Activated CD4-positive, alpha-beta T cell treated with anti-CD3 and anti-CD28 coated beads for 36 hours (primary cell): ENCODE measurements at regions of chr17 and their contacts with region 1.

Region 1: DNA sequence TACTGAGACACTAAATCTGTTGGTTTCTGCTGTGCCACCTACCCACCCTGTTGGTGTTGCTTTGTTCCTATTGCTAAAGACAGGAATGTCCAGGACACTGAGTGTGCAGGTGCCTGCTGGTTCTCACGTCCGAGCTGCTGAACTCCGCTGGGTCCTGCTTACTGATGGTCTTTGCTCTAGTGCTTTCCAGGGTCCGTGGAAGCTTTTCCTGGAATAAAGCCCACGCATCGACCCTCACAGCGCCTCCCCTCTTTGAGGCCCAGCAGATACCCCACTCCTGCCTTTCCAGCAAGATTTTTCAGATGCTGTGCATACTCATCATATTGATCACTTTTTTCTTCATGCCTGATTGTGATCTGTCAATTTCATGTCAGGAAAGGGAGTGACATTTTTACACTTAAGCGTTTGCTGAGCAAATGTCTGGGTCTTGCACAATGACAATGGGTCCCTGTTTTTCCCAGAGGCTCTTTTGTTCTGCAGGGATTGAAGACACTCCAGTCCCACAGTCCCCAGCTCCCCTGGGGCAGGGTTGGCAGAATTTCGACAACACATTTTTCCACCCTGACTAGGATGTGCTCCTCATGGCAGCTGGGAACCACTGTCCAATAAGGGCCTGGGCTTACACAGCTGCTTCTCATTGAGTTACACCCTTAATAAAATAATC is 14.6 kb downstream of the STH start:
- DNase-seq: no peak
- ATAC-seq: no peak
- H3K4me3 Mint-ChIP-seq: no peak overlapping the region
- H3K27ac Mint-ChIP-seq: no peak overlapping the region
- H3K4me1 Mint-ChIP-seq: peaks cover 2% of the 10 kb centered on the region
- H3K27me3 Mint-ChIP-seq: no peaks in the 10 kb centered on the region

Region 2: DNA sequence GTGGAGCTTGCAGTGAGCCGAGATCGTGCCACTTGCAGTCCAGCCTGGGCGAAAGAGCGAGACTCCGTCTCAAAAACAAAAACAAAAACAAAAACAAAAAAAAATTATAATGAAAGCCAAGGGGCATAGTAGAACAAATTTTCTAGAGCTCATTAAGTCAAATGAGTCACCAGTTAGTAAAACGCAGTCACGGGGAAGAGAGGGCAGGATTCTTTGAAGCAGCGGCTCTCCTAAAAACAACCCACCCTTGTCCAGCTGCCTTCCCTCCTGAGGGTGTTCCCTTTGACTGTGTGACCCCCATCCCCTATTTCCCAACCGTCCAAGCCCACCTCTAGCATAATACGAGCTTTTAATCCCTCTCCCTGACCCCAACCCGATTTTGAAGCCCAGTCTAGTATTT is 58.7 kb before region 1 on chr17:
- CTCF ChIA-PET with region 1: no interaction called
- POLR2A ChIA-PET with region 1: no interaction called
- intact Hi-C with region 1: loop called in 1 of 2 experiments (anchors 10 kb)
- DNase-seq: no peak
- ATAC-seq: no peak
- H3K4me3 Mint-ChIP-seq: no peak overlapping the region
- H3K27ac Mint-ChIP-seq: no peak overlapping the region
- H3K4me1 Mint-ChIP-seq: no peaks in the 10 kb centered on the region
- H3K27me3 Mint-ChIP-seq: peaks cover 15% of the 10 kb centered on the region

Region 3: GRCh38 chr17:46193626-46194392 is 180.2 kb after region 1 on chr17:
- CTCF ChIA-PET with region 1: no interaction called
- POLR2A ChIA-PET with region 1: no interaction called
- intact Hi-C with region 1: no loop called
- DNase-seq: peak; percentile 96
- ATAC-seq: peak; percentile 83
- H3K4me3 Mint-ChIP-seq: peak overlapping the region; percentile 74
- H3K27ac Mint-ChIP-seq: peak overlapping the region; percentile 94
- H3K4me1 Mint-ChIP-seq: peaks cover 56% of the 10 kb centered on the region
- H3K27me3 Mint-ChIP-seq: no peaks in the 10 kb centered on the region